ENCODE measurements at regions of chr19 and their contacts with region 1.

Region 1: DNA sequence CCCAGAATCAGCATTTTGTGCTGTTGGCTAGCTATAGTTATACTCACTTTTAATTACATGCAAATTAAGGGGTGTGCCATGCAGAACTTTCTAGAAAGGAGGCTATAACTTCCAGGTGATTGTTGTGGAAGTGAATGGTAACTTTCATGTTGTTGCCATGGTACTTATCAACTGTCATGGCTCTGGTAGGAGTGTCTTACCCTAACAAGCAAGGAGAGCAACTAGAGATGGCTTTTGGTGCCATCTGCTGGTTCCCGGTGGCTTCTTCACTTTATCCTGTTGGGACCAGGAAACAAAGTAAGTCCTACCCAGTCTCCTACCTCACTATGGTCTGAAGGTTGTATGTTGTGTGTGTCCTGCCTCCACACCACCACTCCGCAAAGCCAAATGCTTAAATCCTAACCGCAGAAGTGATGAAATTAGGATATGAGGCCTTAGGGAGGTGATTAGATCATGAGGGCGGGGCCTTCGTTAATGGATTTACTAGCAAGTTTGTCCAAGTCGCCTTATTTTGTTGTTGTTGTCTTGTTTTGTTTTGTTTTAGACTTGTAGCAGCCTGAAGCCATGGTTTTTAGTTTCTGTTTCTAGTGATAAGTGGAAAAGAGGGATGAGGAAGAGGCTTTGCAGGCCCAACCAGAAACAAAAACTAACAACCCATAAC is 22.6 kb downstream of the FBXL12 start:
- DNase-seq: peak; percentile 80
- ATAC-seq: peak; percentile 24

Region 2: GRCh38 chr19:8832132-8833021 is 963.9 kb before region 1 on chr19 and contains the starts of genes MBD3L1 and ZNF558:
- intact Hi-C with region 1: loop called (anchors 10 kb)
- DNase-seq: peak; percentile 99
- ATAC-seq: peak; percentile 96
- total RNA-seq, gene MBD3L1: not detected
- total RNA-seq, gene ZNF558: 8.8 TPM

Region 3: GRCh38 chr19:9205501-9206113 is 590.6 kb before region 1 on chr19:
- intact Hi-C with region 1: loop called (anchors 5 kb)
- DNase-seq: no peak
- ATAC-seq: no peak

Region 4: GRCh38 chr19:9435279-9436268 is 360.7 kb before region 1 on chr19 and contains the start of gene ZNF266:
- intact Hi-C with region 1: loop called (anchors 10 kb)
- DNase-seq: peak; percentile 93
- ATAC-seq: peak; percentile 93
- total RNA-seq, gene ZNF266: 7.2 TPM

Region 5: GRCh38 chr19:9621156-9622037 is 174.8 kb before region 1 on chr19 and contains the start of gene ZNF561:
- intact Hi-C with region 1: loop called (anchors 1 kb)
- DNase-seq: peak; percentile 92
- ATAC-seq: peak; percentile 94
- total RNA-seq, gene ZNF561: 20.3 TPM

Region 6: DNA sequence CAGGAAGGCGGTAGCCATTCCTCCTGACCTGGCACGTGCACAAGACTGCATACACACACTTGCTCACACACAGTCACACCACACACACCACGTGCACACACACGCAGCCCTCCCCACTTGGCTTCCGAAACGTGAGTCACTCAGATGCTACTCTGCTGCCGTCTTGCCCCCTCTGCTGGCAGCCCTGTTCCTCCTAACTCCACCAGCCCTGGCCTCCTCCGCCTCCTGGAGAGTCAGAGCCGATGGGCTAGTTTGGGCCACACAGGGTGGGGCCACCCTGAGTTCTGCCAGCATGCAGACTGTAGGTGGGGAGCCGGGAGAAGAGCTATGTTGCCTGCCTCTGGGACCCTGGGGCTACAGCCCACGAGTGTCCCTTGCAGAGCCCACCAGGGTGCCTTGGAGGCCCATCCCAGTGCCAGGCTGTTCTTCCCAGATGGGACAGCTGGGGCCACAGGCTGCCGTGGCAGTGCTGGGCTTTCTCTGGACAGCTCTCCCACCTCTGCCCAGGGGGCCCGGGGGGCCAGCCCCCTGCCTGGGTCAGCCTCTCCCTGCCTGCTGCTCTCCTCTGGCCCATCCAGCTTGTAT is 50.9 kb after region 1 on chr19:
- intact Hi-C with region 1: no loop called
- DNase-seq: no peak
- ATAC-seq: no peak

Region 7: GRCh38 chr19:9885077-9885552 is 88.9 kb after region 1 on chr19:
- intact Hi-C with region 1: no loop called
- DNase-seq: peak; percentile 73
- ATAC-seq: peak; percentile 77